Panc1 (cell line): ENCODE measurements at regions of chr5 and their contacts with region 1.

Region 1: GRCh38 chr5:172707285-172708182 is 63.5 kb downstream of the DUSP1 start:
- DNase-seq: no peak
- ATAC-seq: peak; percentile 95
- H3K4me3 ChIP-seq: no peak overlapping the region
- H3K27ac ChIP-seq: no peak overlapping the region
- H3K4me1 ChIP-seq: no peaks in the 10 kb centered on the region
- H3K27me3 ChIP-seq: no peaks in the 10 kb centered on the region
- CTCF ChIP-seq: peak; percentile 90

Region 2: GRCh38 chr5:172370648-172371545 is 336.6 kb before region 1 on chr5:
- CTCF ChIA-PET with region 1: no interaction called
- POLR2A ChIA-PET with region 1: no interaction called
- in situ Hi-C with region 1: no loop called
- intact Hi-C with region 1: no loop called
- DNase-seq: no peak
- ATAC-seq: peak; percentile 76
- H3K4me3 ChIP-seq: no peak overlapping the region
- H3K27ac ChIP-seq: peak overlapping the region; percentile 66; the same call in 1 of the 2 replicates
- H3K4me1 ChIP-seq: peaks cover 3% of the 10 kb centered on the region; the same call in 1 of the 2 replicates
- H3K27me3 ChIP-seq: no peaks in the 10 kb centered on the region
- CTCF ChIP-seq: peak; percentile 83

Region 3: GRCh38 chr5:172920447-172920849 is 212.9 kb after region 1 on chr5:
- CTCF ChIA-PET with region 1: no interaction called
- POLR2A ChIA-PET with region 1: no interaction called
- in situ Hi-C with region 1: no loop called
- intact Hi-C with region 1: no loop called
- DNase-seq: no peak
- ATAC-seq: peak; percentile 55
- H3K4me3 ChIP-seq: no peak overlapping the region
- H3K27ac ChIP-seq: peak overlapping the region; percentile 44; the same call in 1 of the 2 replicates
- H3K4me1 ChIP-seq: peaks cover 10% of the 10 kb centered on the region
- H3K27me3 ChIP-seq: no peaks in the 10 kb centered on the region
- CTCF ChIP-seq: no peak

Region 4: GRCh38 chr5:172932313-172933017 is 224.9 kb after region 1 on chr5:
- CTCF ChIA-PET with region 1: interaction called, 11 read pairs
- POLR2A ChIA-PET with region 1: no interaction called
- in situ Hi-C with region 1: no loop called
- intact Hi-C with region 1: no loop called
- DNase-seq: no peak
- ATAC-seq: peak; percentile 82
- H3K4me3 ChIP-seq: no peak overlapping the region
- H3K27ac ChIP-seq: peak overlapping the region; percentile 36; the same call in 1 of the 2 replicates
- H3K4me1 ChIP-seq: peaks cover 19% of the 10 kb centered on the region
- H3K27me3 ChIP-seq: no peaks in the 10 kb centered on the region
- CTCF ChIP-seq: peak; percentile 98